ENCODE measurements at regions of chr18 and their contacts with region 1.

Region 1: GRCh38 chr18:69898241-69898861 is 49.3 kb downstream of the CD226 start:
- DNase-seq: no peak
- ATAC-seq: peak; percentile 63
- H3K4me3 ChIP-seq: peak overlapping the region; percentile 43; the same call in 1 of the 2 replicates
- H3K27ac ChIP-seq: peak overlapping the region; percentile 84
- H3K4me1 ChIP-seq: peaks cover 31% of the 10 kb centered on the region
- H3K27me3 ChIP-seq: no peaks in the 10 kb centered on the region
- CTCF ChIP-seq: no peak
- EP300 ChIP-seq: no peak
- POLR2A ChIP-seq: no peak
- RAD21 ChIP-seq: no peak

Region 2: DNA sequence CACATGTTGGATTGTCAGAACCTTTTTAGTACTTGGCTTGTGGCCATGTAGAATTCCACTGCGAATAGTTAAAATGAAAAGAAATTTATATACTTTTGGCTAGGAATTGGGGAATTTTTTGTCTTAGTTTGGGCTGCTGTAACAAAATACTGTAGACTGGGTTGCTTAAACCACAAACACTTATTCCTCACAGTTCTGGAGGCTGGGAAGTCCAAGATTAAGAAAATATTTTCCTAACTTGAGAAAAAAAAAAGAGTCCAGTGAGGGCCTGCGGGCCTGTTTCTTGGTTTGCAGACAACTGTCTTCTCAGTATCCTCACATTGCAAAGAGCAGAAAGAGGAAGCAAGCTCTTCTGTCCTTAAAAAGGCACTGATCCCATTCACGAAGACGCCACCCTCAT is 32.6 kb before region 1 on chr18:
- CTCF ChIA-PET with region 1: interaction called, 5 read pairs
- POLR2A ChIA-PET with region 1: no interaction called
- RAD21 ChIA-PET with region 1: interaction called, 4 read pairs
- SMC1A ChIA-PET with region 1: interaction called, 4 read pairs
- in situ Hi-C with region 1: no loop called
- intact Hi-C with region 1: loop called (anchors 2 kb)
- DNase-seq: no peak
- ATAC-seq: no peak
- H3K4me3 ChIP-seq: no peak overlapping the region
- H3K27ac ChIP-seq: no peak overlapping the region
- H3K4me1 ChIP-seq: peaks cover 5% of the 10 kb centered on the region; the same call in 1 of the 2 replicates
- H3K27me3 ChIP-seq: no peaks in the 10 kb centered on the region
- CTCF ChIP-seq: no peak
- EP300 ChIP-seq: no peak
- POLR2A ChIP-seq: no peak
- RAD21 ChIP-seq: no peak

Region 3: GRCh38 chr18:69908838-69909237 is 10.5 kb after region 1 on chr18:
- CTCF ChIA-PET with region 1: no interaction called
- POLR2A ChIA-PET with region 1: no interaction called
- RAD21 ChIA-PET with region 1: no interaction called
- SMC1A ChIA-PET with region 1: interaction called, 14 read pairs
- in situ Hi-C with region 1: no loop called
- intact Hi-C with region 1: no loop called
- DNase-seq: no peak
- ATAC-seq: no peak
- H3K4me3 ChIP-seq: no peak overlapping the region
- H3K27ac ChIP-seq: no peak overlapping the region
- H3K4me1 ChIP-seq: no peaks in the 10 kb centered on the region
- H3K27me3 ChIP-seq: no peaks in the 10 kb centered on the region
- CTCF ChIP-seq: no peak
- EP300 ChIP-seq: no peak
- POLR2A ChIP-seq: no peak
- RAD21 ChIP-seq: no peak

Region 4: GRCh38 chr18:69948919-69949537 is 50.7 kb after region 1 on chr18:
- CTCF ChIA-PET with region 1: interaction called, 9 read pairs
- POLR2A ChIA-PET with region 1: interaction called, 3 read pairs
- RAD21 ChIA-PET with region 1: interaction called, 4 read pairs
- SMC1A ChIA-PET with region 1: interaction called, 5 read pairs
- in situ Hi-C with region 1: no loop called
- intact Hi-C with region 1: loop called (anchors 1 kb)
- DNase-seq: peak; percentile 88
- ATAC-seq: peak; percentile 83
- H3K4me3 ChIP-seq: peak overlapping the region; percentile 33; the same call in 1 of the 2 replicates
- H3K27ac ChIP-seq: peak overlapping the region; percentile 80
- H3K4me1 ChIP-seq: peaks cover 28% of the 10 kb centered on the region
- H3K27me3 ChIP-seq: no peaks in the 10 kb centered on the region
- CTCF ChIP-seq: no peak
- EP300 ChIP-seq: peak; percentile 97 to 99
- POLR2A ChIP-seq: no peak
- RAD21 ChIP-seq: peak; percentile 1; the same call in 1 of the 2 replicates

Region 5: GRCh38 chr18:70036771-70037347 is 138.5 kb after region 1 on chr18:
- CTCF ChIA-PET with region 1: no interaction called
- POLR2A ChIA-PET with region 1: no interaction called
- RAD21 ChIA-PET with region 1: interaction called, 6 read pairs
- SMC1A ChIA-PET with region 1: interaction called, 4 read pairs
- in situ Hi-C with region 1: no loop called
- intact Hi-C with region 1: loop called (anchors 2 kb)
- DNase-seq: peak; percentile 79
- ATAC-seq: peak; percentile 97
- H3K4me3 ChIP-seq: no peak overlapping the region
- H3K27ac ChIP-seq: peak overlapping the region; percentile 61
- H3K4me1 ChIP-seq: peaks cover 21% of the 10 kb centered on the region
- H3K27me3 ChIP-seq: no peaks in the 10 kb centered on the region
- CTCF ChIP-seq: no peak
- EP300 ChIP-seq: peak; percentile 68 to 85
- POLR2A ChIP-seq: peak; percentile 53; the same call in 1 of the 2 replicates
- RAD21 ChIP-seq: no peak

Region 6: GRCh38 chr18:70089858-70090257 is 191.5 kb after region 1 on chr18:
- CTCF ChIA-PET with region 1: no interaction called
- POLR2A ChIA-PET with region 1: no interaction called
- RAD21 ChIA-PET with region 1: no interaction called
- SMC1A ChIA-PET with region 1: no interaction called
- in situ Hi-C with region 1: no loop called
- intact Hi-C with region 1: no loop called
- DNase-seq: no peak
- ATAC-seq: no peak
- H3K4me3 ChIP-seq: no peak overlapping the region
- H3K27ac ChIP-seq: no peak overlapping the region
- H3K4me1 ChIP-seq: no peaks in the 10 kb centered on the region
- H3K27me3 ChIP-seq: no peaks in the 10 kb centered on the region
- CTCF ChIP-seq: no peak
- EP300 ChIP-seq: no peak
- POLR2A ChIP-seq: no peak
- RAD21 ChIP-seq: no peak